ENCODE measurements at regions of chr7 and their contacts with region 1.

Region 1: DNA sequence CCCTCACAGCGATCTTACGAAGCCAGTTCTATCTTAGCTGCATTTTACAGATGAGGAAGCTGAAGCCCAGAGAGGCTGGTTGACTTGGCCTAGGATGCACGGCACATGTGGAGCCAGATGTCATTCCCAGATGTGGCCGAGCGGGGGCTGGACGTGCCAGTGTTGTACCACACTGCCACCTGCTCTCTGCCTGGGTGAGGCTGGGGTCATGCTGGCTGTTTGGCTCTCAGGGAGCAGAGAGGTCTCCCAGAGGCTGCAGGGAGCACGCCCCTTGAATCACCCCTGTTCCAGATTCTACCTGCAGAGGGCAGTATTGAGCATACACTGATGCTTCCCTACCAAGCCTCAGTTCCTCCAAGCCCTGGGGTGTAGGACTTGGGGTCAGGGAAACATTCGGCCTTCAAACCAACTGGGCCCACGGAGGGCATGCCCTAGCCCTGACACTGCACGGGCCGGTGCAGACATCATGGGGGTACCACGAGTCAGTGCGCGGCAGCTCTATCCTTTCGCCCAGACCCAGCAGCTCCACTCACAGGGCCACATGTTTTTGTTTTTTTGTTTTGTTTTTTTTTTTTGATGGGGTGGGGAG is 3.8 kb upstream of the GTF2IRD1 start:
- DNase-seq: peak; percentile 67
- H3K4me3 Mint-ChIP-seq: no peak overlapping the region
- H3K27ac Mint-ChIP-seq: no peak overlapping the region
- H3K4me1 Mint-ChIP-seq: peaks cover 25% of the 10 kb centered on the region
- H3K27me3 Mint-ChIP-seq: peaks cover 13% of the 10 kb centered on the region

Region 2: GRCh38 chr7:74401137-74401859 is 48.6 kb before region 1 on chr7:
- CTCF ChIA-PET with region 1: no interaction called
- POLR2A ChIA-PET with region 1: no interaction called
- DNase-seq: peak; percentile 75
- H3K4me3 Mint-ChIP-seq: no peak overlapping the region
- H3K27ac Mint-ChIP-seq: no peak overlapping the region
- H3K4me1 Mint-ChIP-seq: no peaks in the 10 kb centered on the region
- H3K27me3 Mint-ChIP-seq: no peaks in the 10 kb centered on the region

Region 3: DNA sequence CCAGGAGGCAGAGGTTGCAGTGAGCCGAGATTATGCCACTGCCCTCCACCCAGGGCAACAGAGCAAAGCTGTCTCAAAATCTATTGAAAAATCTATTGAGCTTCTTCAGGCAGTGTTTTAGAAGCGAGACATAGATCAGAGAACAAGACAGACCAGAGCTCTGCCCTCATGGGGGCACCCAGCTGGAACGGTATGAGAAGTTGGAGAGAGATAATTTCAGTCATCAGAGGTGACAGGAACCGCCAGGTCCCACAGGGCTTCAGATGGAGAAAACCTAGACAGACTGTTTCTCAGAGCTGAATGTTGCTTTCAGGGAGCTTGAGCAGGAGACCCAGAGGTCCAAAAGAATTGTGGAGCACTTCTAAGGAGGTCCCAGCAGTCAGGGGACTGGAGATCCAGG is 10.4 kb before region 1 on chr7:
- CTCF ChIA-PET with region 1: interaction called, 11 read pairs
- POLR2A ChIA-PET with region 1: no interaction called
- DNase-seq: no peak
- H3K4me3 Mint-ChIP-seq: no peak overlapping the region
- H3K27ac Mint-ChIP-seq: no peak overlapping the region
- H3K4me1 Mint-ChIP-seq: no peaks in the 10 kb centered on the region
- H3K27me3 Mint-ChIP-seq: peaks cover 2% of the 10 kb centered on the region

Region 4: GRCh38 chr7:74569501-74570075 is 119.7 kb after region 1 on chr7:
- CTCF ChIA-PET with region 1: interaction called, 15 read pairs
- POLR2A ChIA-PET with region 1: interaction called, 4 read pairs
- DNase-seq: peak; percentile 49
- H3K4me3 Mint-ChIP-seq: peak overlapping the region; percentile 45
- H3K27ac Mint-ChIP-seq: peak overlapping the region; percentile 87
- H3K4me1 Mint-ChIP-seq: peaks cover 33% of the 10 kb centered on the region
- H3K27me3 Mint-ChIP-seq: no peaks in the 10 kb centered on the region